Caco-2 (cell line): ENCODE measurements at regions of chr19 and their contacts with region 1.

Region 1: GRCh38 chr19:7799640-7800355 is 30.2 kb upstream of the EVI5L start:
- DNase-seq: peak; percentile 66 to 82
- H3K4me3 ChIP-seq: peak overlapping the region; percentile 27
- H3K4me3 Mint-ChIP-seq: peak overlapping the region; percentile 58
- H3K27ac Mint-ChIP-seq: no peak overlapping the region
- H3K4me1 ChIP-seq: no peaks in the 10 kb centered on the region
- H3K4me1 Mint-ChIP-seq: no peaks in the 10 kb centered on the region
- H3K27me3 ChIP-seq: no peaks in the 10 kb centered on the region
- H3K27me3 Mint-ChIP-seq: no peaks in the 10 kb centered on the region
- CTCF ChIP-seq: peak; percentile 49 to 73

Region 2: GRCh38 chr19:7562646-7563393 is 237.0 kb before region 1 on chr19:
- CTCF ChIA-PET with region 1: interaction called, 57 read pairs
- POLR2A ChIA-PET with region 1: no interaction called
- intact Hi-C with region 1: no loop called
- DNase-seq: peak in 1 of 2 experiments; percentile 36
- H3K4me3 ChIP-seq: no peak overlapping the region
- H3K4me3 Mint-ChIP-seq: no peak overlapping the region
- H3K27ac Mint-ChIP-seq: no peak overlapping the region
- H3K4me1 ChIP-seq: no peaks in the 10 kb centered on the region
- H3K4me1 Mint-ChIP-seq: no peaks in the 10 kb centered on the region
- H3K27me3 ChIP-seq: no peaks in the 10 kb centered on the region
- H3K27me3 Mint-ChIP-seq: no peaks in the 10 kb centered on the region
- CTCF ChIP-seq: no peak

Region 3: DNA sequence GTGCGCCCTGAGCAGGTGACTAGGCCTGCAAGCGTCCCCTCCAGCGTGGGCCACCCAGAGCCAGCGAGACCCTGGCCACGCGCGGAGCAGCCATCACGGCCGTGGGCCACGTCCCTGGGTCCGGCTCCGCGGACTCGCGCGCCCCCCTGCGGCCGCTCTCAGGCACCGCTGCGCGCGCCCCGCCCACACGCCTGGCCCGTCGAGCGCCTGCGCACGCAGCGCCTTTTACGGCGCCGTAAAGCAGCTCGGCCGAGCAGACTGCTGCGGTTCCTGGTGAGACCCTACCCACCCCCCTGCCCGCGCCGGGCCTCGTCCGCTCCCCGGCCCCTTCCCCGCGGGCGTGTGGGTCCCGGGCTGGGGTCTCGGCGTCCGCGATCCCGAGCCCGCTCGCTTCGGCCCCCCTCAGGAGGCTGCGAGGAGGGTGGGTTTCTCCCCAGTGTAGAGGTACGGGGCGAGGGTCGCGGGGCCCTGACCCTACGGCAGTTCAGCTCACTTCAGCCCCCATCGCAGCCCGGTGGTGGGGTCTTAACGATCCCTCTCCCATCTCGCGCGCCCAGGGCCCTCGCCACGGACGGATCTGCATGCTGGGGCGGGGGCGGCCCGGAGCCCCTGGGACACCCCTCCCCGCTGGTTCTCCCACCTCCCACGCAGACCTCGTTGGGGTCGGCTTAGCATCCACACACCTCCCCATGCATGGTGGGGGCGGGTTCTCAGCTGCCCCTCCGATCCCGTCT is 119.0 kb before region 1 on chr19 and contains the start of gene TRAPPC5:
- CTCF ChIA-PET with region 1: interaction called, 15 read pairs
- POLR2A ChIA-PET with region 1: no interaction called
- intact Hi-C with region 1: loop called (anchors 1 kb)
- DNase-seq: peak; percentile 79 to 89
- H3K4me3 ChIP-seq: peak within 1 kb of the TSS; percentile 97
- H3K4me3 Mint-ChIP-seq: peak within 1 kb of the TSS; percentile 82
- H3K27ac Mint-ChIP-seq: peak within 1 kb of the TSS; percentile 77
- H3K4me1 ChIP-seq: peaks cover 13% of the 10 kb centered on the region; the same call in 1 of the 2 replicates
- H3K4me1 Mint-ChIP-seq: peaks cover 8% of the 10 kb centered on the region
- H3K27me3 ChIP-seq: no peaks in the 10 kb centered on the region
- H3K27me3 Mint-ChIP-seq: no peaks in the 10 kb centered on the region
- CTCF ChIP-seq: peak; percentile 32 to 94
- total RNA-seq, gene TRAPPC5: 80.3 and 83.4 TPM in 2 replicates

Region 4: DNA sequence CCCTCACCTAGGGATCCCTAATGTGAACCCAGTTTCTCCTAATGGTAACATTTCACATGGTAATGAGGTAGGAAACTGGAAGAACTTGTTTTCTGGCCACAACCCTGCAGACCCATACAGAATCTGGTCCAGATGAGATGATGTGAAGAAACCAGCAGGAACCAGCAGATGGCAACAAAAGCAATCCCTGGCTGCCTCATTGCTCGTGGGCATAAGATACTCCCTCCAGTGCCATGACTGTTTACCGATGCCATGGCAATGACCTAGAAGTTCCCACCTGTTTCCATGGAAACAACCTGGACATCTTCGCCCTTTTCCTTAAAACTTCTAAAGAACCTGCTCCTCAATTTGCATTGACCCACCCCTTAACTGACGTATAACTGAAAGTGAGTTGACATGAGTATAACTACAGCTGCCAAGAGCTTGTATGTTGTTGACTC is 51.0 kb before region 1 on chr19:
- CTCF ChIA-PET with region 1: no interaction called
- POLR2A ChIA-PET with region 1: no interaction called
- intact Hi-C with region 1: loop called (anchors 2 kb)
- DNase-seq: peak in 1 of 2 experiments; percentile 37
- H3K4me3 ChIP-seq: no peak overlapping the region
- H3K4me3 Mint-ChIP-seq: no peak overlapping the region
- H3K27ac Mint-ChIP-seq: no peak overlapping the region
- H3K4me1 ChIP-seq: no peaks in the 10 kb centered on the region
- H3K4me1 Mint-ChIP-seq: no peaks in the 10 kb centered on the region
- H3K27me3 ChIP-seq: no peaks in the 10 kb centered on the region
- H3K27me3 Mint-ChIP-seq: peaks cover 3% of the 10 kb centered on the region
- CTCF ChIP-seq: peak in 1 of 2 experiments; percentile 6

Region 5: GRCh38 chr19:7868676-7869452 is 69.1 kb after region 1 on chr19:
- CTCF ChIA-PET with region 1: interaction called, 6 read pairs
- POLR2A ChIA-PET with region 1: interaction called, 21 read pairs
- intact Hi-C with region 1: no loop called
- DNase-seq: peak; percentile 92 to 94
- H3K4me3 ChIP-seq: peak overlapping the region; percentile 77
- H3K4me3 Mint-ChIP-seq: peak overlapping the region; percentile 87
- H3K27ac Mint-ChIP-seq: peak overlapping the region; percentile 89
- H3K4me1 ChIP-seq: peaks cover 7% of the 10 kb centered on the region
- H3K4me1 Mint-ChIP-seq: peaks cover 9% of the 10 kb centered on the region
- H3K27me3 ChIP-seq: no peaks in the 10 kb centered on the region; the same call in 1 of the 2 replicates
- H3K27me3 Mint-ChIP-seq: no peaks in the 10 kb centered on the region
- CTCF ChIP-seq: peak; percentile 53 to 71